CD4-positive, alpha-beta memory T cell (primary cell): ENCODE measurements at regions of chr5 and their contacts with region 1.

Region 1: DNA sequence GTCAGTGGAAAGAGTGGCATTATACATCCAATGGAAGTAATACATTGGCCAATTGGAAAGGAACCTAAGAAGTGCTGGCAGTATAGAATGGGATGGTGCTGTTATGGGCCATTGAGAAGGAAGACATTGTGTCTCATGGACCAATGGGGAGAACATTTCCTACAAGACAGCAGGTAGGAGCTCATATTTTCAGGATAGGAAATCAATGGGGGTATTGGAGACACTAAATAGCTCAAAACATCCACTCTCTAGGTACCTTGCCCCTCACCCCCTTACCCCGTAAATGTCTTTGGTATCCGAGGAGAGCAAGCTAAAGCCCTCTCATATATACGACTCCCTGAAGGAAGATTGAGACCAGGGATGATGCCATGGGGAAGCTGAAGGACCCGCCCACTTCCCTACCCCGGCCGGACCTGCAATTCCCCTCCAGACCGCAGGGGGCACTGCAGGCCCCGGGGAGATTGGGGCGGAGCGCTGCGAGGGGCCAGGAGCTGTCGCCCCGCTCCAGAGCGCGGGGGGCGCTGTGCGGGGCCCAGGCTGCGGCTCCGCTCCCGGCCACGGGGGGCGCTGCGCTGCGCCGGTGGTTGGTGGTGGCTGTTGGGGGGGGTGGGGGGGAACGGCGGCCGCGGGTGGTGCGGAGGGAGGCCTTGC is at the start of gene KDM3B:
- DNase-seq: peak; percentile 85 to 98 (median 95)
- H3K4me3 ChIP-seq: peak within 1 kb of the TSS; percentile 82 to 96
- H3K4me3 Mint-ChIP-seq: peak within 1 kb of the TSS; percentile 93 to 98 (median 96)
- H3K27ac ChIP-seq: peak within 1 kb of the TSS; percentile 89
- H3K27ac Mint-ChIP-seq: peak within 1 kb of the TSS; percentile 95 to 99 (median 97)
- H3K4me1 ChIP-seq: peaks cover 38% of the 10 kb centered on the region
- H3K4me1 Mint-ChIP-seq: peaks cover 31 to 54% (median 43%) of the 10 kb centered on the region in 4 donors
- H3K27me3 ChIP-seq: no peaks in the 10 kb centered on the region
- H3K27me3 Mint-ChIP-seq: peaks cover 0 to 1% of the 10 kb centered on the region in 2 donors
- total RNA-seq, gene KDM3B: 84.7 to 85.6 TPM

Region 2: DNA sequence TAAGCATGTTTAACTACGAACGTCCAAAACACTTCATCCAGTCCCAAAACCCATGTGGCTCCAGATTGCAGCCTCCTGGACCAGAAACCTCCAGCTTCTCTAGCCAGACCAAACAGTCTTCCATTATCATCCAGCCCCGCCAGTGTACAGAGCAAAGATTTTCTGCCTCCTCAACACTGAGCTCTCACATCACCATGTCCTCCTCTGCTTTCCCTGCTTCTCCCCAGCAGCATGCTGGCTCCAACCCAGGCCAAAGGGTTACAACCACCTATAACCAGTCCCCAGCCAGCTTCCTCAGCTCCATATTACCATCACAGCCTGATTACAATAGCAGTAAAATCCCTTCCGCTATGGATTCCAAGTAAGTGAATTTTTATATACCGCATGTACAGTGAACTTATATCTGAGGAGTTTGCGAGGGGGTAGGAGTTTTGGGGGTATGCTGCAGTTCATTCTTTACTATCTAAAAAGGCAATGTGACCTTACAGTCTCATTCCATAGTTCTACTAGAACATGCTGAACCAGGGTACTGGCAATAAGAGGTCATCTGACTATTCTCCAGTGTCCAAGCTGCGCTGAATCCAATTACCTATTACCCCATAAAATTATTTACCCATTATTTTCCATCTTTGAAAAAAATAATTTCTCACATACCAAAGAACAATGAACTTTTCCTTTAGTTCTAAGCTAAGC is 481.4 kb before region 1 on chr5:
- CTCF ChIA-PET with region 1: no interaction called
- POLR2A ChIA-PET with region 1: no interaction called
- intact Hi-C with region 1: no loop called
- DNase-seq: no peak
- H3K4me3 ChIP-seq: no peak overlapping the region
- H3K4me3 Mint-ChIP-seq: no peak overlapping the region
- H3K27ac ChIP-seq: no peak overlapping the region
- H3K27ac Mint-ChIP-seq: no peak overlapping the region
- H3K4me1 ChIP-seq: no peaks in the 10 kb centered on the region
- H3K4me1 Mint-ChIP-seq: no peaks in the 10 kb centered on the region
- H3K27me3 ChIP-seq: no peaks in the 10 kb centered on the region
- H3K27me3 Mint-ChIP-seq: no peaks in the 10 kb centered on the region

Region 3: GRCh38 chr5:138035605-138036537 is 316.3 kb before region 1 on chr5:
- CTCF ChIA-PET with region 1: interaction called, 3 read pairs
- POLR2A ChIA-PET with region 1: no interaction called
- intact Hi-C with region 1: loop called (anchors 5 kb)
- DNase-seq: peak; percentile 75 to 81 (median 76)
- H3K4me3 ChIP-seq: no peak overlapping the region
- H3K4me3 Mint-ChIP-seq: peak overlapping the region in 7 of 8 donors; percentile 1 to 90 (median 56)
- H3K27ac ChIP-seq: no peak overlapping the region
- H3K27ac Mint-ChIP-seq: peak overlapping the region; percentile 14 to 77 (median 72)
- H3K4me1 ChIP-seq: peaks cover 20% of the 10 kb centered on the region
- H3K4me1 Mint-ChIP-seq: peaks cover 18 to 38% (median 25%) of the 10 kb centered on the region in 4 donors
- H3K27me3 ChIP-seq: no peaks in the 10 kb centered on the region
- H3K27me3 Mint-ChIP-seq: no peaks in the 10 kb centered on the region

Region 4: GRCh38 chr5:138331449-138332368 is 20.5 kb before region 1 on chr5 and contains the start of gene CDC25C:
- CTCF ChIA-PET with region 1: interaction called, 314 read pairs
- POLR2A ChIA-PET with region 1: interaction called, 261 read pairs
- intact Hi-C with region 1: loop called (anchors 1 kb)
- DNase-seq: peak; percentile 94 to 99 (median 97)
- H3K4me3 ChIP-seq: peak within 1 kb of the TSS; percentile 43 to 71
- H3K4me3 Mint-ChIP-seq: peak within 1 kb of the TSS; percentile 77 to 90 (median 88)
- H3K27ac ChIP-seq: peak within 1 kb of the TSS; percentile 20
- H3K27ac Mint-ChIP-seq: peak within 1 kb of the TSS; percentile 36 to 92 (median 77)
- H3K4me1 ChIP-seq: peaks cover 13% of the 10 kb centered on the region
- H3K4me1 Mint-ChIP-seq: peaks cover 5 to 16% (median 11%) of the 10 kb centered on the region in 4 donors
- H3K27me3 ChIP-seq: no peaks in the 10 kb centered on the region
- H3K27me3 Mint-ChIP-seq: no peaks in the 10 kb centered on the region
- total RNA-seq, gene CDC25C: not detected

Region 5: DNA sequence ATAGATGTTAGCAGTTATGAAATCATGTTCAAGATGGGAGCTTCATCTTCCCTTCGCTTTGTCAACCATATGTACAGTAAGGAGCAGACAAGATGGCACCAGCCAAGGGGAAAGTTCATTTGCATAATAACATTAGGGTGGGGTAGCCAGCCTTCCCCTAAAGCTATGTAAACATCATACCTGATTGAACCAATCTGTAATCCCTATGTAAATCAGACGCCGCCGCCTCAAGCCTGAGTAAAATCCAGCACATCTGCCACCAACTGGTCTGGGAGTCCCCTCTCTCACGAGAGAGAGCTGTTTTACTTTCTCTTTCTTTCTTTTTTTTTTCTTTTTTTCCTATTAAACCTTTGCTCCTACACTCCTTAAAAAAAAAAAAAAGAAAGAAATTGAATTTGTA is 55.8 kb after region 1 on chr5:
- CTCF ChIA-PET with region 1: interaction called, 16 read pairs
- POLR2A ChIA-PET with region 1: no interaction called
- intact Hi-C with region 1: no loop called
- DNase-seq: peak in 1 of 5 donors; percentile 8
- H3K4me3 ChIP-seq: no peak overlapping the region
- H3K4me3 Mint-ChIP-seq: no peak overlapping the region
- H3K27ac ChIP-seq: no peak overlapping the region
- H3K27ac Mint-ChIP-seq: peak overlapping the region; percentile 25 to 85 (median 36)
- H3K4me1 ChIP-seq: no peaks in the 10 kb centered on the region
- H3K4me1 Mint-ChIP-seq: peaks cover 6 to 12% (median 10%) of the 10 kb centered on the region in 4 donors
- H3K27me3 ChIP-seq: no peaks in the 10 kb centered on the region
- H3K27me3 Mint-ChIP-seq: no peaks in the 10 kb centered on the region

Region 6: DNA sequence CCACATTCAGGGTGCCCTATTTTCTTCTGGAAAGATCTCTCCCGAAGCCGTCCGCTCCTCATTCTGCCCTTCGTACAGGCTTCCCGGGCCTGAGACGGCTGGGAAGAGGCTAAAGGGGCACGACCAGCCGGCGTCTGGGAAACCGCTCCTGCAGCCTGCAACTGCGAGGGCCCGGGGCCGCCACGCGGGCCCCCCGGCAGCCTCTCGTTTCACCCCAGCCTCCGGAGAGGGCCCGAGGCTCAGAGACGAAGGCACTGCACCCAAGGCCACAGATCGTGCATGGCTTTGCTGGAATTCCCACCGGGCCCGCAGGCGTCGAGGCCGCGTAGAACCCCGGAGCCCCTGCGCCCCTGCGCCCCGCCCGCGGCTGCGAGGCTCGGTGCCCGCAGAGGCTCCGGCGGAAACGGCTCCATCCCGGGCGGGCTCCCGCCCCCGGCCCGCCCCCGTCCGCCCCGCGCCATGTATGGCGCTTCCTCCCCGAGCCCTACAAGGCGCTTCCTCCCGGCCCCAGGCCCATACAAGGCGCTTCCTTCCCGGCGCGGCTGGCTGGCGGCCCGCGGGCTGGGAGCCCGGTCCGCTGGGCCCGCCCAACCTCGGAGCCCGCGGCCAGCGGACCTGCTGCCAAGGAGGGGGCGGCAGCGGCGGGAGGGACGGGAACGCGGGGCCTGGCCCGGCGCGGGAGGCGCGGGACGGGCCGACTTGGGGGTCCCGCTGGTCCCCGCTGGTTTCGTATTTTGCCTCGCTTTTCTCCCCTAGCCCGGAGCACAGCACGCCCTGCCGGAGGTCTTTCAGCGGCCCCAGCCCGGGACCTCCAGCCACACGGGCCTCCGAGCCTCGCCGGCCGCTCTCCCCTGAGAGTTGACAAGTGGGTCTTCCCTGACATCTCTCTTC is 139.7 kb after region 1 on chr5:
- CTCF ChIA-PET with region 1: no interaction called
- POLR2A ChIA-PET with region 1: no interaction called
- intact Hi-C with region 1: loop called (anchors 10 kb)
- DNase-seq: peak; percentile 81 to 87 (median 83)
- H3K4me3 ChIP-seq: peak overlapping the region in 1 of 2 donors; percentile 60
- H3K4me3 Mint-ChIP-seq: peak overlapping the region; percentile 84 to 97 (median 92)
- H3K27ac ChIP-seq: peak overlapping the region; percentile 34
- H3K27ac Mint-ChIP-seq: peak overlapping the region in 4 of 7 donors; percentile 71 to 94 (median 79)
- H3K4me1 ChIP-seq: peaks cover 24% of the 10 kb centered on the region
- H3K4me1 Mint-ChIP-seq: peaks cover 7 to 21% (median 12%) of the 10 kb centered on the region in 4 donors
- H3K27me3 ChIP-seq: peaks cover 8% of the 10 kb centered on the region
- H3K27me3 Mint-ChIP-seq: peaks cover 4 to 16% of the 10 kb centered on the region in 2 donors